ENCODE measurements at regions of chr7 and their contacts with region 1.

Region 1: GRCh38 chr7:74429153-74429747 is 24.5 kb upstream of the GTF2IRD1 start:
- DNase-seq: no peak
- H3K4me3 ChIP-seq: no peak overlapping the region
- H3K27ac ChIP-seq: no peak overlapping the region
- H3K4me1 ChIP-seq: no peaks in the 10 kb centered on the region
- H3K27me3 ChIP-seq: no peaks in the 10 kb centered on the region
- CTCF ChIP-seq: no peak
- POLR2A ChIP-seq: no peak

Region 2: GRCh38 chr7:74183613-74184450 is 245.4 kb before region 1 on chr7:
- CTCF ChIA-PET with region 1: no interaction called
- POLR2A ChIA-PET with region 1: no interaction called
- dilution Hi-C with region 1: no loop called
- intact Hi-C with region 1: no loop called
- DNase-seq: peak; percentile 36
- H3K4me3 ChIP-seq: peak overlapping the region in 1 of 3 experiments; percentile 26
- H3K27ac ChIP-seq: peak overlapping the region; percentile 13
- H3K4me1 ChIP-seq: peaks cover 51% of the 10 kb centered on the region
- H3K27me3 ChIP-seq: no peaks in the 10 kb centered on the region
- CTCF ChIP-seq: peak; percentile 3 to 24
- POLR2A ChIP-seq: no peak

Region 3: GRCh38 chr7:74709880-74710671 is 280.8 kb after region 1 on chr7:
- CTCF ChIA-PET with region 1: no interaction called
- POLR2A ChIA-PET with region 1: no interaction called
- dilution Hi-C with region 1: no loop called
- intact Hi-C with region 1: loop called (anchors 5 kb)
- DNase-seq: no peak
- H3K4me3 ChIP-seq: no peak overlapping the region
- H3K27ac ChIP-seq: no peak overlapping the region
- H3K4me1 ChIP-seq: no peaks in the 10 kb centered on the region
- H3K27me3 ChIP-seq: no peaks in the 10 kb centered on the region
- CTCF ChIP-seq: no peak
- POLR2A ChIP-seq: no peak